Gastrocnemius medialis (tissue), 4 donors: ENCODE measurements at regions of chr11 and their contacts with region 1.

Region 1: GRCh38 chr11:65652511-65653231 is 10.0 kb downstream of the RELA start:
- DNase-seq: peak; percentile 78 to 87
- ATAC-seq: peak; percentile 88 to 90
- H3K4me3 ChIP-seq: peak overlapping the region; percentile 61 to 77 (median 70)
- H3K27ac ChIP-seq: peak overlapping the region; percentile 91 to 96 (median 94)
- H3K4me1 ChIP-seq: peaks cover 20 to 28% of the 10 kb centered on the region in 2 donors
- H3K27me3 ChIP-seq: no peaks in the 10 kb centered on the region
- CTCF ChIP-seq: no peak
- POLR2A ChIP-seq: peak; percentile 44 to 46

Region 2: GRCh38 chr11:65625628-65626342 is 26.9 kb before region 1 on chr11:
- in situ Hi-C with region 1: no loop called
- intact Hi-C with region 1: no loop called
- DNase-seq: peak in 1 of 2 donors; percentile 46
- ATAC-seq: peak; percentile 37 to 46
- H3K4me3 ChIP-seq: no peak overlapping the region
- H3K27ac ChIP-seq: no peak overlapping the region
- H3K4me1 ChIP-seq: no peaks in the 10 kb centered on the region
- H3K27me3 ChIP-seq: no peaks in the 10 kb centered on the region
- CTCF ChIP-seq: peak in 4 of 5 experiments; percentile 47 to 63 (median 56)
- POLR2A ChIP-seq: no peak

Region 3: GRCh38 chr11:65662799-65663638 is 10.3 kb after region 1 on chr11 and contains the start of gene RELA:
- in situ Hi-C with region 1: no loop called
- intact Hi-C with region 1: loop called (anchors 1 kb)
- DNase-seq: peak; percentile 78 to 89
- ATAC-seq: peak; percentile 90
- H3K4me3 ChIP-seq: peak within 1 kb of the TSS; percentile 65 to 91 (median 78)
- H3K27ac ChIP-seq: peak within 1 kb of the TSS; percentile 91 to 99 (median 96)
- H3K4me1 ChIP-seq: peaks cover 22 to 26% of the 10 kb centered on the region in 2 donors
- H3K27me3 ChIP-seq: no peaks in the 10 kb centered on the region
- CTCF ChIP-seq: peak in 3 of 5 experiments; percentile 11 to 43 (median 29)
- POLR2A ChIP-seq: peak; percentile 82 to 88
- total RNA-seq, gene RELA: 39.7 to 68.3 (median 56.3) TPM

Region 4: GRCh38 chr11:65695456-65696241 is 43.0 kb after region 1 on chr11:
- in situ Hi-C with region 1: no loop called
- intact Hi-C with region 1: no loop called
- DNase-seq: no peak
- ATAC-seq: peak; percentile 46 to 54
- H3K4me3 ChIP-seq: no peak overlapping the region
- H3K27ac ChIP-seq: peak overlapping the region in 1 of 4 donors; percentile 9
- H3K4me1 ChIP-seq: no peaks in the 10 kb centered on the region
- H3K27me3 ChIP-seq: no peaks in the 10 kb centered on the region
- CTCF ChIP-seq: no peak
- POLR2A ChIP-seq: no peak

Region 5: DNA sequence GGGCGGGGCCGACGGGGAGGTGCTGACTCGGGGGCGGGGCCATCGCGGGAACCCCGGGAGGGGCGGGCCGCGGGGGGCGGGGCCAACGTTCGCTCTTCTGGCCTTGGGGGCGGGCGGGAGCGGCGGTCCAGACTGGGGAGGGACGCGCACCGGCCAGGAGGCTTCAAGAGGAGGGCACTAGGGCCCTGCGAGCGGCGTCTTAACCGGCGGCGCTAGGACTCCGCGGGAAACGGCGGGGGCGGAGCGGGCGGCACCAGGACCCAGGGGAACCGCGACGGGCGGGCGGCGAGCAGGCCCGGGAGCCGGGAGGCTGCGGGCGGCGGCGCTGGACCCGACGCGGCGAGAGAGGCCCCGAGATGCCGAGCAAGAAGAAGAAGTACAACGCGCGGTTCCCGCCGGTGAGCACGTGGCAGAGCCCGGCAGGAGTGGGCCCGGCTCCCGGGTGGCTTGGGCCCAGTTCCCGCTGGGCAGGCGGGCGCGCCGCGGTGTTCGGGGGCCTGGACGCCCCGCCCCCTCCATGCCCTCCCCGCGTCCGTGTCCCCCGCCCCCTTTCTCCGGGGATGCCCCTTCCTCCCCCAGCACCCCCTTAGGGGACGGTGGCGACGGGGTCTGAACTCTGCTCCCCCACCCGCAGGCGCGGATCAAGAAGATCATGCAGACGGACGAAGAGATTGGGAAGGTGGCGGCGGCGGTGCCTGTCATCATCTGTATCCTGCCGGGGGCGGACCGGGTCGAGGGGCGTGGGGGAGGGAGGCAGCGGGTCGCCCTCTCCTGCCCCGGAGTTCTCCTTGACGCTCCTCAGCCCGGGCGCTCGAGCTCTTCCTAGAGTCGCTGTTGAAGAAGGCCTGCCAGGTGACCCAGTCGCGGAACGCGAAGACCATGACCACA is 266.7 kb after region 1 on chr11 and contains the start of gene DRAP1:
- in situ Hi-C with region 1: no loop called
- intact Hi-C with region 1: no loop called
- DNase-seq: peak; percentile 99
- ATAC-seq: peak; percentile 66 to 75
- H3K4me3 ChIP-seq: peak within 1 kb of the TSS; percentile 77 to 95 (median 92)
- H3K27ac ChIP-seq: peak within 1 kb of the TSS; percentile 86 to 98 (median 94)
- H3K4me1 ChIP-seq: peaks cover 47 to 49% of the 10 kb centered on the region in 2 donors
- H3K27me3 ChIP-seq: no peaks in the 10 kb centered on the region
- CTCF ChIP-seq: peak in 3 of 5 experiments; percentile 9 to 46 (median 37)
- POLR2A ChIP-seq: peak; percentile 83 to 84
- total RNA-seq, gene DRAP1: 96.7 to 146 (median 110) TPM